ENCODE measurements at regions of chr17 and their contacts with region 1.

Region 1: GRCh38 chr17:57597531-57598453 is 147.3 kb downstream of the CCDC182 start:
- DNase-seq: no peak
- H3K4me3 ChIP-seq: no peak overlapping the region
- H3K27ac ChIP-seq: peak overlapping the region; percentile 39
- H3K27me3 ChIP-seq: no peaks in the 10 kb centered on the region
- CTCF ChIP-seq: peak; percentile 96

Region 2: DNA sequence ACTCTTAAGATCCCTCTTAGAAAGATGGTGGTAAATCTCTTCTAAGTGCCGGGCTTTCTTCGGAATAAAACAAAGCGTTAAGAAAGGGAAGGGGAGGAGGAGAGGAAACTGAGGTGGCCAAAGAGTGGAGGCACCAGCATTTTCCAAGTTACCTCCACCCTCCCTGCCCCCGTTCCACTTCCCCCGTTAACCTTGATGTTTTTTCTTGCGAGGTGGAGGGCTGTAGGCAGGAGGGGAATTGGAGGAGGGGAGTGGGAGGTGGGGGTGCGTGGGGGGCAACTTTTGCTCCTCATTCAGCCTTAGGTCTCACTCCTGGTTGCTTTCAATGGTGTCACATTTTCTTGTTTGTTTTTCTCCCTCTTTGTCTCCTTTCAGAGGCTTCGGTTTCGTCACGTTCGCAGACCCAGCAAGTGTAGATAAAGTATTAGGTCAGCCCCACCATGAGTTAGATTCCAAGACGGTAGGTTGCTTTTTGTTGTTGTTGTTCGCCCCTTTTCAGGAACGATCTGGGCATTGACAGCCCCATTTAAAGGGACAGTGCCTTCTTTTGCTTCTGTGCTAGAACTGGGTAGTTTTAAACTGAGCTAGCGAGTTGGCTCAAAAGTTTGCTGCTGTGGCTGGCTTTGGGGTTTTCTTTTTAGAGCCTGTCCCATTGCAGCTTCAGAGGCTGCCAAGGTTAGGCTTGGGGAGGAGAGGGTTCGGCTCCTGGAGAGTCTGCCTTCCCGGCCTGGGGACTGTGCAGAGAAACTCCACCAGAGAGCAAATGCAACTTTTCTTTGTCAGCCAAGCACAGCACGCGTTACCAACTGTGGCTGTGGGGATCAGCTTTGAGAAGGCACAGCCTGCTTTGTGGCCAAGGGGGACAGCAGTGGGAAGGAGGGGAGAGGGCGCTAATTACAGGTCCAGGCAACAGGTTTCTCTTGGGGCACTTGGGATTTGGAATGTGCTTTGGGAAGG is 339.6 kb before region 1 on chr17:
- CTCF ChIA-PET with region 1: interaction called, 10 read pairs
- POLR2A ChIA-PET with region 1: no interaction called
- DNase-seq: no peak
- H3K4me3 ChIP-seq: peak overlapping the region; percentile 71
- H3K27ac ChIP-seq: no peak overlapping the region
- H3K27me3 ChIP-seq: no peaks in the 10 kb centered on the region
- CTCF ChIP-seq: no peak

Region 3: DNA sequence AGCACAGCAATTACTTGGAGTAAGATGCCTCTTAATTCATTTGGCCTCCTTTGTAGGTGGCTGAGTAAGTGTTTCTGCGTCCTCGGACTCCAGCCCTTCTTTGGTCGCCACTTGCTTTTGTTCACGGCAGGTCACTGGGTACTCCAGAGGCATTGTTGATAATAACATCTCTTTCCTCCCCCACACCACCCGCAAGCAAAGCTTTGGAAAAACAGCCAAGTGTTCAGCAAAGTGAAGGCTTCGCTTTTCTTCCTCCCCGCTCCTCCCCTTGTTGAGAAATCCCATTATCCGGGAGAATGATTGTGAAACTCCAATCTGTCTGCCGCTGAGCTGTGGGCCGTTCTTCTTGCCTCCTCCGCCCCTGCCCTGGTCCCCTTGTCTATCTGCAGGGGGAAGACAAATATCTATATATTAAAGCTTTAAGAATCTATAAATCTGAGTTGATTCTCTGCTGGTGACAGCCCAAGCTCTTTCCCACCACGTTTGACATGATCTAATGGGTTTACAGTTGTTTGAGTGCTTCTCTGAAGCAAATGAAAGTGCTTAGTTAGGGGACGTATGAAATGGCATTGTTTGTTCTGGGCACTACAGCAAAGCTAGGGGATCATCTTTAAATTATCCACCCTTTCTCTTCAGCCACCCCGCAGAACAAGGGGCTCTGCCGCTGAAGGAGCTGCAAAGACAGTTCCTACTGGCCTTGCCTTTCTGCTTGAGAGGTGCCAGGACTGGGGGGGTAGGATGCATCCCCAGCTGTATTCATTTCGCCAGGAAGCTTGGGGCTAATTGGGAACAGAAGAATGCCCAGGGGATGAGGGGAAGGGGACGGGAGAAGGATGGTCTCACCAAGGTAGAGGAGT is 19.8 kb before region 1 on chr17:
- CTCF ChIA-PET with region 1: interaction called, 29 read pairs
- POLR2A ChIA-PET with region 1: no interaction called
- DNase-seq: peak; percentile 38
- H3K4me3 ChIP-seq: peak overlapping the region; percentile 47
- H3K27ac ChIP-seq: peak overlapping the region; percentile 40
- H3K27me3 ChIP-seq: no peaks in the 10 kb centered on the region
- CTCF ChIP-seq: no peak

Region 4: GRCh38 chr17:57615836-57616757 is 18.3 kb after region 1 on chr17:
- CTCF ChIA-PET with region 1: interaction called, 23 read pairs
- POLR2A ChIA-PET with region 1: no interaction called
- DNase-seq: no peak
- H3K4me3 ChIP-seq: no peak overlapping the region
- H3K27ac ChIP-seq: no peak overlapping the region
- H3K27me3 ChIP-seq: no peaks in the 10 kb centered on the region
- CTCF ChIP-seq: no peak

Region 5: DNA sequence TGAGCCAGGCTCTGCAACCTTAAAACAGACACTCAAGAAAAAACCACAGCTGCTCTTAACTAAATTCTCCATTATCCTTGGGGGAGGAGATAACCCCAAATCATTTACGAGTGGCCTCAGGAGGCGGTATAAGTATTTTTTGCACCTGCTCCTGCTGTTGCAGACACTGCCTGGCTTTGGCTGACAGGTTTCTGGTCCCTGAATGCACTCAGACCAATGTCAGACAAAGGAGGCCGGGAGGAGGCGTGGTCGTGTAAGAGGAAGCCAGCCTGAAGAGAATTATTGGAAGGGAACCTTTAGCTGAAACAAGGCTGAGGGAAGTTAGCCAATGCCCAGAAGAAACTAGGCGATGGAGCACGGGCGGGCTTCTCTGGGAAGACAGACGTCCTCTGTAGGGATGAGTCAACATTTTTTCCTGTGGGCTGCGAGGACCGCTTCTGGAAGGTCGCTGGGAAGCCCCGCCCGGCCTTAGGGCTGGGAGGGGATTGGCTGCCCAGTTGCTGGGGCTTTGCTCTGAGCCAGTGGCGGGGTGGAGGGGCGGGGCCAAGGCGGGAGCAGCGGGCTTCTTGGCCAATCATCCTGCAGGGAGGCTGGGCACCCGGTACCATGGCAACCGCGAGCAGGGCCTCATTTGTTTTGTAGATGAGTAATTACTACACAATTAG is 65.0 kb after region 1 on chr17:
- CTCF ChIA-PET with region 1: interaction called, 37 read pairs
- POLR2A ChIA-PET with region 1: no interaction called
- DNase-seq: peak; percentile 98
- H3K4me3 ChIP-seq: peak overlapping the region; percentile 41
- H3K27ac ChIP-seq: peak overlapping the region; percentile 93
- H3K27me3 ChIP-seq: no peaks in the 10 kb centered on the region
- CTCF ChIP-seq: no peak

Region 6: DNA sequence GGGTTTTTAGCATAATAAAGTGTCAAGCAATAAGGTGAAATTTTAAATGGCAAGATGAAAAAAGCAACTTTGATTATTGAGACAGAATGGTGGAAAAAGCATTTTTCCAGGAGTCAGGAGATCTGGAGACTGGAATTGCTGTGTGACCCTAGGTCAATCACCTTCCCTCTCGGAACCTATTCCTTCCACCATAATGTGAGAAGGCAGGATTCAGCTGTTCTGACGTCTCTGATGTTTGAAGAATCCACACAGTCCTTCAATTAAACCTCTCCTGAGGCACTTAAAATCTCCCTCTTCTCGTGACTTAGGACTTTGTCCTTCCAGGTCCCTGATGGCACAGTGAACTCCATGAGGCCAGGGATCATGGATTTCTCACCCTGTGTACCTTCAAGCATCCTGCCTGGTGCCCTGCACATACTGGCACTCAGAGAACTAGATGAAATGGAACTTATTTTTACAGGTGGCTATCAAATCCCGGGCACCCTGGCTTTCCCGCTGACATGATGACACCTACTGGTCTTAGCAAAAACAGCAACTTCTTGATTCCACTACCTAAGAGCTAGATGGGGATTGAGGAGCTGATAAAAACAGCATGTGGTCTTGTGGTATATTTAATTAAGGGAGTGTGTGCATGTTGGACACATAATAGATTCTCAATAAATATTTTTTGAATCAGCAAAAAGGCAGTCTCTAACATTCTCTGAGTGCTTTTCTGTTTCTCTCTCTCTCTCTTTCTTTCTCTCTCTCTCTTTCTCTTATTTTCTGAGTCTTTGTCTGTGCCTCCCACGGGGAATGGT is 149.6 kb after region 1 on chr17:
- CTCF ChIA-PET with region 1: interaction called, 30 read pairs
- POLR2A ChIA-PET with region 1: no interaction called
- DNase-seq: peak; percentile 33
- H3K4me3 ChIP-seq: no peak overlapping the region
- H3K27ac ChIP-seq: no peak overlapping the region
- H3K27me3 ChIP-seq: peaks cover 26% of the 10 kb centered on the region
- CTCF ChIP-seq: peak; percentile 91

Region 7: GRCh38 chr17:58006924-58007780 is 409.4 kb after region 1 on chr17 and contains the start of gene SRSF1:
- CTCF ChIA-PET with region 1: no interaction called
- POLR2A ChIA-PET with region 1: no interaction called
- DNase-seq: peak; percentile 94
- H3K4me3 ChIP-seq: peak within 1 kb of the TSS; percentile 99
- H3K27ac ChIP-seq: peak within 1 kb of the TSS; percentile 96
- H3K27me3 ChIP-seq: no peaks in the 10 kb centered on the region
- CTCF ChIP-seq: no peak
- polyA plus RNA-seq, gene SRSF1: 215 and 249 TPM in 2 replicates

Region 8: GRCh38 chr17:58587702-58588254 is 990.0 kb after region 1 on chr17:
- CTCF ChIA-PET with region 1: no interaction called
- POLR2A ChIA-PET with region 1: no interaction called
- DNase-seq: no peak
- H3K4me3 ChIP-seq: no peak overlapping the region
- H3K27ac ChIP-seq: no peak overlapping the region
- H3K27me3 ChIP-seq: no peaks in the 10 kb centered on the region
- CTCF ChIP-seq: peak; percentile 98